ENCODE measurements at regions of chr4 and their contacts with region 1.

Region 1: GRCh38 chr4:41963105-41963504 is 18.5 kb upstream of the DCAF4L1 start:
- DNase-seq: no peak
- CTCF ChIP-seq: no peak

Region 2: GRCh38 chr4:41977709-41978108 is 14.6 kb after region 1 on chr4:
- CTCF ChIA-PET with region 1: interaction called, 10 read pairs
- POLR2A ChIA-PET with region 1: no interaction called
- DNase-seq: no peak
- CTCF ChIP-seq: no peak